ENCODE measurements at regions of chr13 and their contacts with region 1.

Region 1: GRCh38 chr13:95247852-95248251 is 53.4 kb downstream of the ABCC4 start:
- DNase-seq: no peak
- ATAC-seq: no peak
- H3K4me3 ChIP-seq: no peak overlapping the region
- H3K27ac ChIP-seq: no peak overlapping the region
- H3K4me1 ChIP-seq: peaks cover 32% of the 10 kb centered on the region
- H3K27me3 ChIP-seq: no peaks in the 10 kb centered on the region
- CTCF ChIP-seq: no peak
- EP300 ChIP-seq: no peak
- POLR2A ChIP-seq: no peak
- RAD21 ChIP-seq: no peak

Region 2: GRCh38 chr13:95234242-95234641 is 13.6 kb before region 1 on chr13:
- CTCF ChIA-PET with region 1: interaction called, 14 read pairs
- POLR2A ChIA-PET with region 1: interaction called, 8 read pairs
- RAD21 ChIA-PET with region 1: interaction called, 23 read pairs
- SMC1A ChIA-PET with region 1: interaction called, 109 read pairs
- in situ Hi-C with region 1: no loop called
- intact Hi-C with region 1: no loop called
- DNase-seq: no peak
- ATAC-seq: peak; percentile 68
- H3K4me3 ChIP-seq: peak overlapping the region; percentile 43; the same call in 1 of the 2 replicates
- H3K27ac ChIP-seq: peak overlapping the region; percentile 49; the same call in 1 of the 2 replicates
- H3K4me1 ChIP-seq: peaks cover 29% of the 10 kb centered on the region
- H3K27me3 ChIP-seq: no peaks in the 10 kb centered on the region
- CTCF ChIP-seq: no peak
- EP300 ChIP-seq: no peak; a peak in 1 of 4 replicates
- POLR2A ChIP-seq: no peak
- RAD21 ChIP-seq: no peak

Region 3: GRCh38 chr13:95432141-95432540 is 184.3 kb after region 1 on chr13:
- CTCF ChIA-PET with region 1: no interaction called
- POLR2A ChIA-PET with region 1: no interaction called
- RAD21 ChIA-PET with region 1: no interaction called
- SMC1A ChIA-PET with region 1: no interaction called
- in situ Hi-C with region 1: no loop called
- intact Hi-C with region 1: no loop called
- DNase-seq: no peak
- ATAC-seq: no peak
- H3K4me3 ChIP-seq: no peak overlapping the region
- H3K27ac ChIP-seq: no peak overlapping the region
- H3K4me1 ChIP-seq: no peaks in the 10 kb centered on the region
- H3K27me3 ChIP-seq: no peaks in the 10 kb centered on the region
- CTCF ChIP-seq: no peak
- EP300 ChIP-seq: no peak
- POLR2A ChIP-seq: no peak
- RAD21 ChIP-seq: no peak

Region 4: GRCh38 chr13:95656386-95657015 is 408.6 kb after region 1 on chr13:
- CTCF ChIA-PET with region 1: no interaction called
- POLR2A ChIA-PET with region 1: no interaction called
- RAD21 ChIA-PET with region 1: no interaction called
- SMC1A ChIA-PET with region 1: no interaction called
- in situ Hi-C with region 1: no loop called
- intact Hi-C with region 1: no loop called
- DNase-seq: no peak
- ATAC-seq: no peak
- H3K4me3 ChIP-seq: no peak overlapping the region
- H3K27ac ChIP-seq: no peak overlapping the region
- H3K4me1 ChIP-seq: no peaks in the 10 kb centered on the region
- H3K27me3 ChIP-seq: no peaks in the 10 kb centered on the region
- CTCF ChIP-seq: no peak
- EP300 ChIP-seq: no peak
- POLR2A ChIP-seq: no peak
- RAD21 ChIP-seq: no peak